Dendritic cell treated with granulocyte-macrophage colony-stimulating factor and Interleukin-4, amounts not matched to agents 40 ng/mL and 50 ng/mL, for 4 days (primary cell): ENCODE measurements at regions of chr19 and their contacts with region 1.

Region 1: DNA sequence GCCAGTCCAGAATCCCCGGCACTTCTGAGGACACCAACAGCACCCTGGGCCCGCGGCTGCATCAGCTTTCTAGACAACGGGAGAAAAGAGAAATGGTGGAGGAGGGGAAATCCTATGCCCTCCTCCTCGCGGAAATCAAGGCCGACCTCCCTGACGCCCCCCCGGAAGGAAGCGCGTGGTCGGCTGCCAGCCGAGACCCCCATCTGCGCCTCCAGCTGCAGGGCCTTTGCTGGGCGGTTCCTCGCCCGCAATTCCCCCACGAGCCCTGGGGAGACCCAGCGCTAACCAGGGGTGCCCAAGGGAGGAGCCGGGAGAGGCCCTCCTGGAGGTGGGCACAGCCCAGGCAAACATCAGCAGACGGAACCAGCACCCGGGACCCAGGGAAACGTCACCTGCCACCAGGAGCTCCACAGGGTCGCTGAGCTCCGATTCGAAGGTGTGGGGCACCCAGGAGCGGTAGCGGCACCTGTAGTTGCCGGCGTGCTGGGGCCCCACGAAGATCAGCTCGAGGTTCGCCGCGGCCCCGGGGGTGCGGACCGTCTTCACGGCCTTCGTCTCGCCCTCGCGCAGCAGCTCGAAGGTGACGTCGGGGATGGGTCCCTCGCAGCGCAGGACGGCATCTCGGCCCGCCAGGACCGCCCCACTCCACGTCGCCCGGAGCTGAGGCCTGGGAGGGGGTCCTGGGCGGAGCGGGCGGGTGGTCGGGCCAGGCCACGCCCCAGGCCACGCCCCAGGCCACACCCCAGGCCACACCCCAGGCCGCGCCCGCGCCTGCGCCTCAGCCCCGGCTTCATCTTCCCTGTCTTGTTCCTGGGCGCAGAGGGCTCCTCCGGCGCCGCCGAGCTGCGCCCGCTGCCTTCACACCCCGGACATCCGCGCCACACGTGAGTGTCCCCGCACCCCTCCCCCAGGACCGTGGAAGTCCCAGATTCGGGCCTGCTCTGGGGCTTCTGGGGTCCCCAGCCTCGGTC is 6.0 kb downstream of the A1BG start:
- H3K4me3 Mint-ChIP-seq: peak overlapping the region; percentile 94
- H3K27ac Mint-ChIP-seq: peak overlapping the region; percentile 86
- H3K4me1 Mint-ChIP-seq: peaks cover 25% of the 10 kb centered on the region
- H3K27me3 Mint-ChIP-seq: peaks cover 31% of the 10 kb centered on the region

Region 2: DNA sequence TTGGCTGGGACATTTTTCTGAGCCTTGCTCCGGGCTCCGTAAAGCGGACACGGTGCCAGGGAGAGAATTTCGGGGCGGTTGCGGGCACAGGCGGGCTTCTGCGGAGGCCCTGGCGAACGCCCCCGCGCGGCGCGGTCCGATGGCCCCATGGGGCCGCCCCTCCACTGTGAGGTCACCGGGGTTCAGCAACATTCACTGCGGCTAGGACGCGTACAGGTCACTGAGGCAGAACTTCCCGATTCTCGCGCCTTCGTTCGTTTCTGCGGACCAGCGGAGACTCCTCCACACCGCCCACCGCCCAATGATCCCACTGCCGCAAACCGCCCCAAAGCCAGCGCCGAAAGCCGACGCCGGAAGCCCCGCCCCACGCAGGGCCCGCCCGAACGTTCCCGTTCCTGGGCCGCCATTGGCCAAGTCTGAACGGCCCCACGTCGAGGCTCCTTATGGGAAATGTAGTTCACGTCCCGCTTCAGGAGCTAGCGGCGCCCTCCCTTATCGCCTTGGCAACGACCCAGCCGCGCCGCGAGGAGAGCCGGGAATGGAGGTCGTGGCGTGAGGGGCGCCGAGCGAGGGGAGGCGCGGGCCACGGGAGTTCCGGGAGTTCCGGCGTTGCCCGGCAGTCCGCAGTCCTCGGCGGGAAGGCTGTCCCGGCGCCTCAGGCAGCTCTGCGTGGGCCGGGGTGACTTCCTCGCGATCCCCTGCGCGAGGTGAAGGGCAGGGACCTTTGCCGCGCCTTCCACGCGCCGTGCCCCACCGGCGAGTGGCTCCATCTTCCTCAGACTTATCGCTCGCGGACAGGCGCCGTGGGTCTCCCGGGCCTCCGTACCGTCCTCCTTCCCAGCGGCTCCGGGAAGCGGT is 61.1 kb after region 1 on chr19 and contains the start of gene ZNF584:
- intact Hi-C with region 1: loop called (anchors 10 kb)
- H3K4me3 Mint-ChIP-seq: peak within 1 kb of the TSS; percentile 96
- H3K27ac Mint-ChIP-seq: peak within 1 kb of the TSS; percentile 88
- H3K4me1 Mint-ChIP-seq: peaks cover 40% of the 10 kb centered on the region
- H3K27me3 Mint-ChIP-seq: no peaks in the 10 kb centered on the region